HepG2 (cell line): ENCODE measurements at regions of chr11 and their contacts with region 1.

Region 1: GRCh38 chr11:111870886-111871692 is at the start of gene ALG9:
- DNase-seq: peak; percentile 71
- ATAC-seq: peak; percentile 95
- H3K4me3 ChIP-seq: peak within 1 kb of the TSS; percentile 94 to 98 (median 95)
- H3K27ac ChIP-seq: peak within 1 kb of the TSS; percentile 92
- H3K4me1 ChIP-seq: peaks cover 24% of the 10 kb centered on the region
- H3K27me3 ChIP-seq: no peaks in the 10 kb centered on the region
- CTCF ChIP-seq: no peak
- EP300 ChIP-seq: no peak
- POLR2A ChIP-seq: peak; percentile 57 to 62
- RAD21 ChIP-seq: no peak
- total RNA-seq, gene ALG9: 24.4 and 39.4 TPM in 2 replicates

Region 2: GRCh38 chr11:111918390-111919258 is 47.5 kb after region 1 on chr11 and contains the start of gene C11orf52:
- CTCF ChIA-PET with region 1: no interaction called
- POLR2A ChIA-PET with region 1: interaction called, 17 read pairs
- in situ Hi-C with region 1: no loop called
- intact Hi-C with region 1: no loop called
- DNase-seq: peak; percentile 89
- ATAC-seq: peak; percentile 91
- H3K4me3 ChIP-seq: peak within 1 kb of the TSS; percentile 49 to 66 (median 58)
- H3K27ac ChIP-seq: peak within 1 kb of the TSS; percentile 66
- H3K4me1 ChIP-seq: peaks cover 88% of the 10 kb centered on the region
- H3K27me3 ChIP-seq: no peaks in the 10 kb centered on the region
- CTCF ChIP-seq: peak; percentile 44
- EP300 ChIP-seq: peak in 1 of 2 experiments; percentile 25; a peak in 2 of 4 replicates
- POLR2A ChIP-seq: peak; percentile 46 to 54; a peak in 2 of 4 replicates
- RAD21 ChIP-seq: peak; percentile 47; the same call in 1 of the 2 replicates
- total RNA-seq, gene C11orf52: 7.4 and 10.5 TPM in 2 replicates

Region 3: DNA sequence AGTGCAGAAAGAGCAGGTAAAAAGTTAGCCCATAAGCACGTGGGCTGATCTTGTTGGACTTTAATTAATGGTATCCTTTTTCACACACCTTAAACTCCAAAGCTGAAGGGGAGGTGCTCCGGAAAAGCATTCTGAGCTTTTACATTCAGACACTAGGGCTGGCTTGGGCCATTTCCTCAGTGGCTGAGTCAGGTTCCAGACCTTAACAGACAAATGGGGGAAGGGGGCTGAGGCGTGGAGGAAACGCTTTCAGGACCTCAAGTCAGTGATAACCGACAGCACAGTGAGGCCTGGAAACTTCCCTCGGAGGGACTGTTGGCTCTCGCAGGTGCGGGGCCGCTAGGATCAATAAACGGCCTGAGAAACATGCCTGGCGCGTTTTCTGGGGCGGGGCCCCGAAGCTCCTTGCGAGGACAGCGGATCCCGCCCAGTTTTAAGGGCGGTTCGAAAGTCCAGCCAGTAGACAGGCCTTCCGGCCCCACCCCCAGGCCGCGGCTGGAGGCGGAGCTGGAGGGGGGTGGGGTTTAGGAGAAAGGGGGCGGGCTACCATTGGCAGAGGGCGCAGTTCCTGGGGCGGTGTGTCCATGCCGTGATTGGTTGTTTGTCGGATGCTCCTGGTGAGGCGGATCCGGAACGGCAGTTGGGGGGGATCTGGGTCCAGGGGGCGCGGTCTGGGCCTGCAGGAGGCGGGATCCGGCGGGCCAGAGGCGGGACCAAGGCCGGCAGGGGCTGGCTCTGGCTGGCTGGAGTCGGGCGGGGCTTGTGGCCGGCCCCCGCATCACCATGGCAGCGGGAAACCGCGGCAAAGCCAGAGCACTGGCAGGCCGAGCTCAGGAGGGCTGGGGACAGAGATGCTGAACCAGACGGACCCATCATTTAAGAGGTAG is 55.7 kb after region 1 on chr11:
- CTCF ChIA-PET with region 1: no interaction called
- POLR2A ChIA-PET with region 1: interaction called, 21 read pairs
- in situ Hi-C with region 1: loop called (anchors 5 kb)
- intact Hi-C with region 1: no loop called
- DNase-seq: peak; percentile 93
- ATAC-seq: peak; percentile 93
- H3K4me3 ChIP-seq: peak overlapping the region; percentile 32 to 60 (median 47); a peak in 5 of 6 replicates
- H3K27ac ChIP-seq: peak overlapping the region; percentile 92
- H3K4me1 ChIP-seq: peaks cover 71% of the 10 kb centered on the region
- H3K27me3 ChIP-seq: no peaks in the 10 kb centered on the region
- CTCF ChIP-seq: no peak
- EP300 ChIP-seq: peak in 1 of 2 experiments; percentile 50; a peak in 2 of 4 replicates
- POLR2A ChIP-seq: peak; percentile 67 to 84
- RAD21 ChIP-seq: no peak